B cell (primary cell): ENCODE measurements at regions of chr15 and their contacts with region 1.

Region 1: GRCh38 chr15:40847205-40847961 is 3.5 kb downstream of the SPINT1 start:
- DNase-seq: peak; percentile 61
- ATAC-seq: peak; percentile 48
- H3K4me3 ChIP-seq: no peak overlapping the region
- H3K4me3 Mint-ChIP-seq: peak overlapping the region; percentile 21
- H3K27ac ChIP-seq: peak overlapping the region; percentile 51 to 71
- H3K27ac Mint-ChIP-seq: peak overlapping the region; percentile 83
- H3K4me1 ChIP-seq: peaks cover 34 to 38% of the 10 kb centered on the region in 2 donors
- H3K4me1 Mint-ChIP-seq: peaks cover 37% of the 10 kb centered on the region
- H3K27me3 ChIP-seq: no peaks in the 10 kb centered on the region
- H3K27me3 Mint-ChIP-seq: no peaks in the 10 kb centered on the region
- CTCF ChIP-seq: no peak

Region 2: GRCh38 chr15:40807028-40807887 is 40.1 kb before region 1 on chr15 and contains the starts of genes DNAJC17 and ZFYVE19:
- CTCF ChIA-PET with region 1: no interaction called
- POLR2A ChIA-PET with region 1: interaction called, 5 read pairs
- intact Hi-C with region 1: loop called (anchors 1 kb)
- DNase-seq: peak; percentile 97
- ATAC-seq: peak; percentile 96
- H3K4me3 ChIP-seq: peak within 1 kb of the TSS; percentile 78 to 100 (median 100)
- H3K4me3 Mint-ChIP-seq: peak within 1 kb of the TSS; percentile 99
- H3K27ac ChIP-seq: peak within 1 kb of the TSS; percentile 86 to 95
- H3K27ac Mint-ChIP-seq: peak within 1 kb of the TSS; percentile 98
- H3K4me1 ChIP-seq: peaks cover 12 to 18% of the 10 kb centered on the region in 2 donors
- H3K4me1 Mint-ChIP-seq: peaks cover 24% of the 10 kb centered on the region
- H3K27me3 ChIP-seq: no peaks in the 10 kb centered on the region
- H3K27me3 Mint-ChIP-seq: no peaks in the 10 kb centered on the region
- CTCF ChIP-seq: peak; percentile 11
- total RNA-seq, gene DNAJC17: 46.1 and 52.3 TPM in 2 replicates
- total RNA-seq, gene ZFYVE19: 29.4 and 29.8 TPM in 2 replicates

Region 3: GRCh38 chr15:40867200-40867599 is 19.8 kb after region 1 on chr15:
- CTCF ChIA-PET with region 1: no interaction called
- POLR2A ChIA-PET with region 1: no interaction called
- intact Hi-C with region 1: no loop called
- DNase-seq: no peak
- ATAC-seq: no peak
- H3K4me3 ChIP-seq: no peak overlapping the region
- H3K4me3 Mint-ChIP-seq: no peak overlapping the region
- H3K27ac ChIP-seq: no peak overlapping the region
- H3K27ac Mint-ChIP-seq: no peak overlapping the region
- H3K4me1 ChIP-seq: no peaks in the 10 kb centered on the region
- H3K4me1 Mint-ChIP-seq: peaks cover 6% of the 10 kb centered on the region
- H3K27me3 ChIP-seq: peaks cover 0 to 5% (median 1%) of the 10 kb centered on the region in 4 experiments
- H3K27me3 Mint-ChIP-seq: no peaks in the 10 kb centered on the region
- CTCF ChIP-seq: no peak